WTC11 (cell line): ENCODE measurements at regions of chr2 and their contacts with region 1.

Region 1: DNA sequence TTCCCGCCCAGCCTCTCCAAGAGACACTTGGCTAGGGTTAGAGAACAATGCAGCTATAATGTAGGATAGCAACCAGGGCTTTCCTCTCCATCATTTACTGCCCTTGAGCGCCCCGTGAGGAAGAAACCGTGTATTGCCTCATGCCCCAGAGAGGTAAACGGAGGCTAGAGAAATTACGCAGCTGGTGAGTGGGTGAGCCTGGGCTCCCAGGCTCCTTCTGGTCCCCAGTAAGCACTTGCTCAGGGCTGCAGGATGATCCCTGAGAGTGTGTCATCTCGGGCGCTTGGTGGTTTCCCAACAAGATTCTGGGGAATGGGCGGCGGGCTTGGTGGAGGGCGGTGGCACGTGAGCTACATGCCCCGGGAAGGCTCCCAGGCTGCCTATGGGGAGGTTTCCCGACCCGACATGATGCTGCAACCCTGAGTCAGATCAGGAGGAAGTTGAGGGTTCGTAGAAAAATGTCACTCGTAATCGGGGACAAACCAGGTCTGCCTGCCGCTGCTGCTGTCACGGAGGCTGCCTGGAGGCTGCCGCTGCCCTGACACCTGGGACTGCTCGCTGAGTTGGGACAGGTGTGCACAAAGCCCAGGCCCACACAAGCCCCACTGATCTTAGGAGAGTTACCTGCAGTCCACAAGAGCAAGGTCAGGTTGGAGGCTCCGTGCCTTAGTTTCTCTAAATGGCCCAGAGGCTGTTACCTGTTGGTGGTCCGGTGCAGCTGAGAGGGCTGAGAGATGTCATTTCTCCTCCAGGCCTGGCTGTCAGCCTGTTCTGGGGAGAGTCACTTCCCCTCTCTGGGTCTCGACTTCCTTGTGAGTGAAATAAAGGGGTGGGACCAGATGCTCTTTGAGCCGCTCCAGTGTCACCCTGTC is at the start of gene GPR55:
- DNase-seq: peak; percentile 72
- ATAC-seq: peak; percentile 94
- H3K4me3 Mint-ChIP-seq: no peak within 1 kb of the TSS
- H3K27ac Mint-ChIP-seq: no peak within 1 kb of the TSS
- H3K4me1 Mint-ChIP-seq: peaks cover 9% of the 10 kb centered on the region
- H3K27me3 Mint-ChIP-seq: no peaks in the 10 kb centered on the region
- CTCF ChIP-seq: peak; percentile 55
- total RNA-seq, gene GPR55: not detected in 3 replicates

Region 2: GRCh38 chr2:230824406-230824978 is 100.2 kb before region 1 on chr2:
- CTCF ChIA-PET with region 1: interaction called, 30 read pairs
- POLR2A ChIA-PET with region 1: no interaction called
- DNase-seq: peak; percentile 59
- ATAC-seq: peak; percentile 89
- H3K4me3 Mint-ChIP-seq: no peak overlapping the region; the same call in 1 of the 2 replicates
- H3K27ac Mint-ChIP-seq: no peak overlapping the region
- H3K4me1 Mint-ChIP-seq: peaks cover 11% of the 10 kb centered on the region
- H3K27me3 Mint-ChIP-seq: peaks cover 5% of the 10 kb centered on the region; the same call in 1 of the 2 replicates
- CTCF ChIP-seq: peak; percentile 70

Region 3: GRCh38 chr2:230847883-230848388 is 76.8 kb before region 1 on chr2:
- CTCF ChIA-PET with region 1: interaction called, 37 read pairs
- POLR2A ChIA-PET with region 1: no interaction called
- DNase-seq: peak; percentile 97
- ATAC-seq: peak; percentile 79
- H3K4me3 Mint-ChIP-seq: no peak overlapping the region
- H3K27ac Mint-ChIP-seq: no peak overlapping the region
- H3K4me1 Mint-ChIP-seq: peaks cover 17% of the 10 kb centered on the region
- H3K27me3 Mint-ChIP-seq: peaks cover 25% of the 10 kb centered on the region
- CTCF ChIP-seq: peak; percentile 96

Region 4: DNA sequence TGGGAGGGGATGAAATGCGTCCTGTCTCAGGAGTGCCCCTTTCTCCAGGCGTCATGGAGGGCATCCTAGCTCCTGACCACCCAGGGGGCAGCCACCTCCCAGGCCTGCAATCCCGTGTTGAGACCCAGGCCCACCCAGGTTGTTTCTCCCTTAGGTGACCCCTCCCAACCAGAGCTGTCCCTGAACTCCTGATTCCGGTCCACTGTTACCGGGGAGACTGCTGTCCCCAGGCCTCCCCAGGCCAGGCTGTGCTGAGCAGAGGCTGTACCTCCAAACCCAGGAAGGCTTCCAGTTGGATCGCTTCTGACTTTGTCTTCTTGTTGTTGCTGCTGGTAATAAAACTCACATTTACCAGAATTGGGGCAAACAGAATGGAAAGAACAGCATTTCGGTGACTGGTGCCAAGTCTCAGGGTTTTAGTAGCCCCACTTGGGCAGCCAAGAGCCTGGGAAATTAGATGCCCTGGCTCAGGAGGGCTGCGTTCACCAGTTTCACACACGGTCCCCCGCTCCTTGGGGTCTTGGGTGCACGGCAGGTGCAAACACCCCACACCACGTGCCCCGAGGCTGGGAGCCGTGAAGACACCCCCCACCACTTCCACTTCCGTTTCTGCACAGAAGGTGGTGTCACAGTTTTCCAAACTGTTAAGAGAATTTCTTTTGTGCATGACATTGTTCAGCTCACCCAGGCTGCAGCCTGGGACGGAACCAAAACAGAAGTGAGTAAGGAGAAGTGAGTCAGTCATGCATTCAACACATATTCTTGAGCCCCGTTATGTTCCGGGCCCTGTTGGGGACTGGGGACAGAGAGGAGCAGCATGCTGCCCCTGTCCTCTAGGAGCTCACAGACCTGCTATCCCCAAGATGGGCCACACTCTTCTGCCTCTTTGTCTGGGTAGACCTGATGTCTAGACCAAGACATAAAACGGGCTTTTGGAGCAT is 30.6 kb before region 1 on chr2:
- CTCF ChIA-PET with region 1: interaction called, 14 read pairs
- POLR2A ChIA-PET with region 1: no interaction called
- DNase-seq: peak; percentile 9
- ATAC-seq: no peak
- H3K4me3 Mint-ChIP-seq: no peak overlapping the region
- H3K27ac Mint-ChIP-seq: peak overlapping the region; percentile 8; the same call in 1 of the 2 replicates
- H3K4me1 Mint-ChIP-seq: peaks cover 23% of the 10 kb centered on the region
- H3K27me3 Mint-ChIP-seq: no peaks in the 10 kb centered on the region; the same call in 1 of the 2 replicates
- CTCF ChIP-seq: no peak

Region 5: GRCh38 chr2:230913406-230914143 is 11.1 kb before region 1 on chr2:
- CTCF ChIA-PET with region 1: interaction called, 25 read pairs
- POLR2A ChIA-PET with region 1: no interaction called
- DNase-seq: no peak
- ATAC-seq: peak; percentile 92
- H3K4me3 Mint-ChIP-seq: no peak overlapping the region
- H3K27ac Mint-ChIP-seq: no peak overlapping the region
- H3K4me1 Mint-ChIP-seq: peaks cover 7% of the 10 kb centered on the region
- H3K27me3 Mint-ChIP-seq: peaks cover 5% of the 10 kb centered on the region; the same call in 1 of the 2 replicates
- CTCF ChIP-seq: 0 out of 2 replicates have a peak, but pooled peaks have one; percentile 25

Region 6: GRCh38 chr2:230987137-230988020 is 62.7 kb after region 1 on chr2:
- CTCF ChIA-PET with region 1: interaction called, 37 read pairs
- POLR2A ChIA-PET with region 1: no interaction called
- DNase-seq: peak; percentile 92
- ATAC-seq: peak; percentile 78
- H3K4me3 Mint-ChIP-seq: peak overlapping the region; percentile 61
- H3K27ac Mint-ChIP-seq: peak overlapping the region; percentile 58
- H3K4me1 Mint-ChIP-seq: peaks cover 24% of the 10 kb centered on the region
- H3K27me3 Mint-ChIP-seq: no peaks in the 10 kb centered on the region
- CTCF ChIP-seq: peak; percentile 93

Region 7: GRCh38 chr2:231052494-231053451 is 128.1 kb after region 1 on chr2:
- CTCF ChIA-PET with region 1: interaction called, 12 read pairs
- POLR2A ChIA-PET with region 1: no interaction called
- DNase-seq: peak; percentile 90
- ATAC-seq: peak; percentile 88
- H3K4me3 Mint-ChIP-seq: peak overlapping the region; percentile 76
- H3K27ac Mint-ChIP-seq: no peak overlapping the region
- H3K4me1 Mint-ChIP-seq: peaks cover 11% of the 10 kb centered on the region
- H3K27me3 Mint-ChIP-seq: peaks cover 46% of the 10 kb centered on the region
- CTCF ChIP-seq: peak; percentile 80

Region 8: DNA sequence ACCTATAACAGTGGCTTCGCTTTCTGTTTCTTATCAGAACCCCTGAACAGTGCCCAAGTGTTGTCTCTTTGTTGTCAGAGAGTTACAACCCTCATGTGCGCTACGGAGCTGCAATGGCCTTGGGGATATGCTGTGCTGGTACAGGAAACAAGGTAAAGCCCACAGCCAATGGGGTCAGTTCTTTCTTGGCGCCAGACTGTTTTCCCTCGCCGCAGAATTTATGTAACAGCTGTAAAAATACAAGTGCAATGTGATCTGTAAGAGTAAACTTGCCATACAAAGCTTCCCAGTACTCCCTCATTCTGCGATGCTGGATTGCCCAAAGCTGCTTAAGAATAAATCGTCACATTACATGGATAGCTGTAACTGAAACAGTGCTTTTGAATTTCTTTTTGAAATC is 214.0 kb after region 1 on chr2:
- CTCF ChIA-PET with region 1: no interaction called
- POLR2A ChIA-PET with region 1: no interaction called
- DNase-seq: no peak
- ATAC-seq: no peak
- H3K4me3 Mint-ChIP-seq: no peak overlapping the region
- H3K27ac Mint-ChIP-seq: no peak overlapping the region
- H3K4me1 Mint-ChIP-seq: peaks cover 11% of the 10 kb centered on the region
- H3K27me3 Mint-ChIP-seq: no peaks in the 10 kb centered on the region
- CTCF ChIP-seq: no peak

Region 9: GRCh38 chr2:231181860-231182512 is 257.3 kb after region 1 on chr2:
- CTCF ChIA-PET with region 1: no interaction called
- POLR2A ChIA-PET with region 1: no interaction called
- DNase-seq: no peak
- ATAC-seq: peak; percentile 15; the same call in 1 of the 2 replicates
- H3K4me3 Mint-ChIP-seq: no peak overlapping the region
- H3K27ac Mint-ChIP-seq: no peak overlapping the region
- H3K4me1 Mint-ChIP-seq: peaks cover 20% of the 10 kb centered on the region
- H3K27me3 Mint-ChIP-seq: no peaks in the 10 kb centered on the region
- CTCF ChIP-seq: no peak